Right ventricle myocardium inferior (tissue), 1 donor: ENCODE measurements at regions of chr3 and their contacts with region 1.

Region 1: GRCh38 chr3:15405448-15406050 is 21.8 kb downstream of the METTL6 start:
- DNase-seq: no peak
- ATAC-seq: peak; percentile 65

Region 2: DNA sequence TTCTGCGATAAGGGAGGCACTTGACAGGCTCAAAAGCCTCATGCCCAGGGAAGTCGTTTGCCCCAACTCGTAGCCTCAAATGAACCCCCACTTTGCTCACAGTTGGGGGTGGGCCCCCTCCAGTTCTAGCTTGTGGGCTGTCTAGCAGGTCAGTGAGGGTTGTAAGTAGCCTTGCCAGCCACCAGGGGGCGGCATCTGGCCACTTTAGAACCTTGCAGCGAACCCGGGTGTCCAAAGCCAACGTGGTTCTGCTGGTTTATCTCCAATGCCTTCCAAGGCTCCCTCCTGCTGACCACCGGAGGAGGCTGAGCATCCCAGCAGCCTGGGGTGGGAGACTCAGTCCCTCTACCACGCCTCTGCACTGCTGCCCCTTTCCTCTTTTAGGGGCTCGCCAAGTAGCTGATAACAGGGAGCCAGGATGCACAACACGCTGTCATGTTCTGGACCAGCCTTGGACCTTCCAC is 297.4 kb before region 1 on chr3:
- intact Hi-C with region 1: loop called (anchors 10 kb)
- DNase-seq: peak; percentile 86
- ATAC-seq: peak; percentile 78

Region 3: DNA sequence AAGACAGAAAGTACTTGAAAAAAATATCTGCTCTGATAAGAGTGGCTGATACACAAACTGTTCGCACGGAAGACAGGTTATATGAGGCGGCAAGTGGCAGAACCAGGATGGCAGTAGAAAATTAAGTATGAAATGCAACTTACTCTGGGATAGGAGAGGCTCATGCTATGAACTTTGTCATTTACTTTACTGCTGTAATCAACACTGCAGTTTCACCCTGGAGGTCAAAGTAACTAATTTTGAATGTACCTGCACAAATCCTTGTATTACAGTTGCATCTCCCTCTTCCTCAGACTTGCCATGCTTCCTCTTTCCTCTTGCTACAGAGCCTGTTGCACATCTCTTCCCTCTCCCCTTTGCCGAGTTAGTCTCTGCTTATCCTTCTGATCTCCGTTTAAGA is 157.0 kb after region 1 on chr3:
- intact Hi-C with region 1: no loop called
- DNase-seq: no peak
- ATAC-seq: no peak